Lower leg skin (tissue), 4 donors: ENCODE measurements at regions of chr2 and their contacts with region 1.

Region 1: GRCh38 chr2:117614823-117615534 is 199.5 kb upstream of the DDX18 start:
- DNase-seq: no peak
- H3K4me3 ChIP-seq: no peak overlapping the region
- CTCF ChIP-seq: no peak
- POLR2A ChIP-seq: no peak

Region 2: DNA sequence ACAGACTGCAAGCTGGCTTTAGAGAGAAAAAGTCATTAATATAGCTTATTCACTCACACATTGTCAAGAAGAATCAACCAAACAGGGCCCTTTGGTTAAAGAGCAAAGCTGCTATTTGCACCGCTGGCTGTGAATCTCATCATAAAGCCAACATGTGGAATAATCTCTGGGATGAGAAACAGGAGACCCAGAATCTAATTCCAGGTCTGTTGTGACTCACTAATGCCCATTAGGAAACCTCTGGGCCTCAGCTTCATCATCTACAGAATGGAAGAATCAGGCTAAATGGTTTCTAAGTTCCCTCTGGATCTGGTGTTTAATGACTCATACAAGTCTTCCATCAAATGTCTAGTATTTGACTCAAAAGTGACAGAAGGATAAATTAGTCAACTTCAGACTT is 392.2 kb before region 1 on chr2:
- intact Hi-C with region 1: loop called (anchors 10 kb)
- DNase-seq: no peak
- H3K4me3 ChIP-seq: no peak overlapping the region
- CTCF ChIP-seq: no peak
- POLR2A ChIP-seq: no peak

Region 3: GRCh38 chr2:117562656-117563055 is 52.3 kb before region 1 on chr2:
- intact Hi-C with region 1: no loop called
- DNase-seq: no peak
- H3K4me3 ChIP-seq: no peak overlapping the region
- CTCF ChIP-seq: no peak
- POLR2A ChIP-seq: no peak